ENCODE measurements at regions of chr1 and their contacts with region 1.

Region 1: DNA sequence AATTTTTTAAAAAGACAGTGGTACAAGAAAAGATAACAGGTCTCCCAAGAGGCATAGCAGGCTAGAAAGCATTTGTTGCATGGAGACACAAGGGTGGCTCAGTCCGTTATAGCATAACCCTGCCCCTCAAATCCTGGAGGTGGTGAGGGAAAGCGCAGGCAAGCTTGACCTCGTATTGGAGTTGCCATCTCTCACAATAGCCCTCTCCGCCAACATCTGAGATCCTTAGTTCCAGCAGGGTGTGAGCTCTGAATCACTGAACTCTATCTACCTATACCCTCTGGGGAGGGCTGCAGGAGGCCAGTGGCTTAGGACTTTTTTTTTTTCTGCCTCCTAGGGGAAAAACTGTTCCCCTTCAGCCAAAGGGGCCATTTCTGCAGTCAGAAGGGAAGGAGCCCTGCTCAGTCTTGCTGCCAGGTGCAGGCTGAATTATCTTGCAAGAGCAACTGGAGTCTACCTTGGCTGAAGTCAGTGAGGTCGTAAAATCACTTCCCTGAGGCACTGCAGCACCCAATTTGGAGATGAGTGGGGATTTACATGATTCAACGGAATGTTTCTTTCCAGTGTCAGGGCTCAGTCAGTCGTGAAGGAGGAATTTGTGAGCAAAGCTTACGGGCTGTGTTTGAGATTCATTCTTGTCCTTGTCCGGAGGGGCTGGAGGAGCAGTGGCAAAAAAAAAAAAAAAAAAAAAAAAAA is 17.2 kb upstream of the C8A start:
- DNase-seq: peak; percentile 9 to 41
- H3K4me3 ChIP-seq: no peak overlapping the region
- H3K4me3 Mint-ChIP-seq: no peak overlapping the region
- H3K27ac Mint-ChIP-seq: no peak overlapping the region
- H3K4me1 ChIP-seq: no peaks in the 10 kb centered on the region
- H3K4me1 Mint-ChIP-seq: no peaks in the 10 kb centered on the region
- H3K27me3 ChIP-seq: no peaks in the 10 kb centered on the region
- H3K27me3 Mint-ChIP-seq: no peaks in the 10 kb centered on the region
- CTCF ChIP-seq: no peak

Region 2: DNA sequence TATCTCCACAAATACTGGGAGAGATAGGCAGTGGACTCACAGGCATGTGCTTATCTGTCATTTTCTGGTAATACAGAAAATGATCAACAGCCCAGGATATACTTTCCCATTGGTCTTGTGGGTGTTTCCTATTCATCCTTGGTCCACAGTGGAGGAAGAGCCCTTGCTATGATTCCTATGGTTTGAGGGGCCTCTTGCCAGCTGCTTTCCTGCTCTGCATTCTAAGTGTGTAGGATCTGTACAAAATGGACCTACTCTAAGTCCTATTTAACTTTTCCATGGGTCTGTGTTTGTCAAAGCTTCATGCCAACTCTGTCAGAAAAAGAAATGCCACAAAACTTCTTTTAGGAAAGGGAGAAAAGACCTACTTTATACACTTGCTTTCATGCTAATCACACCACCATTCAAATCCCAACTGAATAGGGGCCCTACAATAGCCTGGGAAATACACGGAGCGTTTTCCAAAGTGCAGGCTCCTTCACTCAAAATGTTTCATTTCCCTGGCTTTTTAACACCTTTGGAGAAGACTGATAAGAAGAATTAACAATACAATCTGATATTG is 274.4 kb before region 1 on chr1:
- CTCF ChIA-PET with region 1: no interaction called
- POLR2A ChIA-PET with region 1: interaction called, 10 read pairs
- intact Hi-C with region 1: no loop called
- DNase-seq: no peak
- H3K4me3 ChIP-seq: no peak overlapping the region
- H3K4me3 Mint-ChIP-seq: no peak overlapping the region
- H3K27ac Mint-ChIP-seq: peak overlapping the region; percentile 11
- H3K4me1 ChIP-seq: peaks cover 55% of the 10 kb centered on the region
- H3K4me1 Mint-ChIP-seq: peaks cover 21% of the 10 kb centered on the region
- H3K27me3 ChIP-seq: no peaks in the 10 kb centered on the region
- H3K27me3 Mint-ChIP-seq: no peaks in the 10 kb centered on the region
- CTCF ChIP-seq: no peak

Region 3: DNA sequence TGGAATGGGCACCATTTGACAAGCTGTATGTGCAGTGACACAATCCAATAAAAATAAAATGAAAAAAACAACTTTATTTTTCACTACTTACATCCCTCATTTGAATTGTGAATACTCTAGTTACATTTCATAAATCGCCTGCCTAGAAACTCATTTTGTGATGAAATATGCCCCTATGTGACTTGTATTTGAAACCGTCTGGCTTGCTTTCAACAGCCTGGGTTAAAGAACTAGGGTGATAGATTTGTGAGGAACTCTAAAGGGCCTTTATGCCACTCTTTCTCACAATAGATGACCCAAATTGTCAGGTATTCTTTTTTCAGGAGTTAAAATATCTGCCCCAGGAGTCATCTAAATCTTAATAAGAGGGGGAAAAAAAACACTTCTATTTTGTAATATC is 448.6 kb after region 1 on chr1:
- CTCF ChIA-PET with region 1: no interaction called
- POLR2A ChIA-PET with region 1: no interaction called
- intact Hi-C with region 1: no loop called
- DNase-seq: no peak
- H3K4me3 ChIP-seq: no peak overlapping the region
- H3K4me3 Mint-ChIP-seq: no peak overlapping the region
- H3K27ac Mint-ChIP-seq: no peak overlapping the region
- H3K4me1 ChIP-seq: peaks cover 24% of the 10 kb centered on the region
- H3K4me1 Mint-ChIP-seq: peaks cover 23% of the 10 kb centered on the region
- H3K27me3 ChIP-seq: no peaks in the 10 kb centered on the region
- H3K27me3 Mint-ChIP-seq: no peaks in the 10 kb centered on the region
- CTCF ChIP-seq: no peak

Measured in Caco-2 (cell line).